Sigmoid colon (tissue), 7 donors: ENCODE measurements at regions of chr16 and their contacts with region 1.

Region 1: DNA sequence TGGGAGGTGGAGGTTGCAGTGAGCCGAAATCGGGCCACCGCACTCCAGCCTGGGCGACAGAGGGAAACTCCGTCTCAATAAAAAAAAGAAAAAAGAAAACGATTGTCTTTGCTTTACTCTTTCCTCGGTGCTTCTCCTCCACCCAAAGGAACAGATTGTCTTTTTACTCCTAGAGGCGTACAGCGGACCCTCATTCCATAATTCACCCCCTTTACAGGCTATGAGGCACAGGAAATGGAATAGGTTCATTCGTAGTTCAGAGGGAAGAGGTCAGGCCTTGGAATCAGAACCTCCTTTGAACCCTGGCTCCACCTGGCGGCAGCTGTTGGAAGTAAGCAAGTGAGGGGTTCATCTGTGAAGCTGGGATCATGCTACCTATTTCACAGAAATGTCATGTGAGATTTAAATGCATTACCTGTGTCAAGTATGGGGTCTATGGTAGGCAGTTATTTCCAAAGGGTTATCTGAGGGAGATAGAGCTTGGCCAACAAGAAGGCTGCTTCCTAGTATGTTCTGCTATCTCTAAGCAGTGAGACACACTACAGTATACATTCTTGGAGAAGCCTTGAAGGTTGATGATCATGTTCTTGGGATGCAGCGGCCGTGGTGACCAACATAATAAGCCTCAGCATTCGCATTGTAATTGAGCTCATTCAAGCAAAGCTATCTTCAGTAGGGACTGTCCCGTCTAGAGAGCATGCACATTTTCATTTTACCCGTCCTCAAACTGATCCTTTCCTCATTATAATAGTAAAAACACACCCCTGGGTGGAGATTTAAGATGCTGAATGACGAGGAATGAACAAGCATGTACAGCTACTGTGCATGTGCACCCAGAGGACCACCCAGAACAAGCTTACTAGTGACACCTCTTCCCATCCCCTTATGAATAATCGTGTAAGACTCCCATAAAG is 18.7 kb upstream of the ZNF689 start:
- DNase-seq: peak; percentile 91
- H3K4me3 ChIP-seq: peak overlapping the region in 2 of 4 donors; percentile 13 to 26
- H3K27ac ChIP-seq: peak overlapping the region; percentile 28 to 64 (median 54)
- H3K4me1 ChIP-seq: peaks cover 0 to 6% (median 4%) of the 10 kb centered on the region in 4 donors
- H3K27me3 ChIP-seq: no peaks in the 10 kb centered on the region
- CTCF ChIP-seq: peak; percentile 75 to 94 (median 86)
- EP300 ChIP-seq: no peak
- POLR2A ChIP-seq: no peak

Region 2: DNA sequence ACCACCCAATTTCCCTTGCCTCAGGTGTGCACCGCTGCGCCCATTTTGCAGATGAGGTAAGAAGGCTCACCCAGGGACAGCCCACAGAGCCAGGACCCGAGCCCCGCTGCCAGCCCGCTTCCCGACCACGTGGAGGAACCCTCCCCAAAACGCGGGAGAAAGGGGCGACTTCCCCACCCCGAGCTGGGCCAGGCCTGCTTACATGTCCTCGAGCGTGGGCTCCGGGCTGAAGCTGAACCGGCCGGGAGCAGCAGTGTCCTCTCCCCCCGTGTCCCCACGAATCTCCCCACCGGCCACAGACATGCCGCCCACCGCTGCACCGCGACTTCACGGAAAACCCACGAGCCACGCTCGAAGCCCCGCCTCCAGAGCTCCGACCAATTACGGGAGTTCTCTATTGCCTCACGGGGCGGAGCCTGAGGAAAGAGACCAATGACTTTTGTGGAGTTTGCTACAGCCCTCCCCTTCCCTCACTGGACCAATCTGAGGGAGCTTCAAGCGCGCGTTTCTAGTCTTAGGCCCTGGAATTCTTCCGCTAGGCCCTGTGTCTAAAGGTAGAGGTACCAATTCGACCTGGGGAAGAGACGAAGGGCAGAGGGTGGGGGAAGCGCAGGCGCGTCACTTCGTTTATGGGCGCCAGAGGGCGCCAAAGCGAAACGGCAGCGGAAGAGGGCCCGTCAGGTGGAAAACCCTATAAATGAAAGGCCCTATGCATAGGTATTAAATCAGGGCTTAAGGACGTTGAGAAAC is 199.0 kb before region 1 on chr16 and contains the start of gene DCTPP1:
- intact Hi-C with region 1: loop called (anchors 5 kb)
- DNase-seq: peak; percentile 98
- H3K4me3 ChIP-seq: peak within 1 kb of the TSS; percentile 46 to 74 (median 56)
- H3K27ac ChIP-seq: peak within 1 kb of the TSS; percentile 79 to 84 (median 82)
- H3K4me1 ChIP-seq: peaks cover 0 to 21% (median 16%) of the 10 kb centered on the region in 4 donors
- H3K27me3 ChIP-seq: no peaks in the 10 kb centered on the region
- CTCF ChIP-seq: peak; percentile 60 to 82 (median 62)
- EP300 ChIP-seq: no peak
- POLR2A ChIP-seq: no peak
- total RNA-seq, gene DCTPP1: 10.5 to 19.9 (median 16.5) TPM

Region 3: GRCh38 chr16:30534368-30535105 is 94.3 kb before region 1 on chr16 and contains the start of gene ZNF747:
- intact Hi-C with region 1: loop called (anchors 5 kb)
- DNase-seq: peak; percentile 97
- H3K4me3 ChIP-seq: peak within 1 kb of the TSS; percentile 45 to 85 (median 66)
- H3K27ac ChIP-seq: peak within 1 kb of the TSS; percentile 89 to 97 (median 94)
- H3K4me1 ChIP-seq: peaks cover 0 to 31% (median 25%) of the 10 kb centered on the region in 4 donors
- H3K27me3 ChIP-seq: no peaks in the 10 kb centered on the region
- CTCF ChIP-seq: no peak
- EP300 ChIP-seq: no peak
- POLR2A ChIP-seq: peak; percentile 50 to 65
- total RNA-seq, gene ZNF747: 10.3 to 15.5 (median 13.1) TPM

Region 4: DNA sequence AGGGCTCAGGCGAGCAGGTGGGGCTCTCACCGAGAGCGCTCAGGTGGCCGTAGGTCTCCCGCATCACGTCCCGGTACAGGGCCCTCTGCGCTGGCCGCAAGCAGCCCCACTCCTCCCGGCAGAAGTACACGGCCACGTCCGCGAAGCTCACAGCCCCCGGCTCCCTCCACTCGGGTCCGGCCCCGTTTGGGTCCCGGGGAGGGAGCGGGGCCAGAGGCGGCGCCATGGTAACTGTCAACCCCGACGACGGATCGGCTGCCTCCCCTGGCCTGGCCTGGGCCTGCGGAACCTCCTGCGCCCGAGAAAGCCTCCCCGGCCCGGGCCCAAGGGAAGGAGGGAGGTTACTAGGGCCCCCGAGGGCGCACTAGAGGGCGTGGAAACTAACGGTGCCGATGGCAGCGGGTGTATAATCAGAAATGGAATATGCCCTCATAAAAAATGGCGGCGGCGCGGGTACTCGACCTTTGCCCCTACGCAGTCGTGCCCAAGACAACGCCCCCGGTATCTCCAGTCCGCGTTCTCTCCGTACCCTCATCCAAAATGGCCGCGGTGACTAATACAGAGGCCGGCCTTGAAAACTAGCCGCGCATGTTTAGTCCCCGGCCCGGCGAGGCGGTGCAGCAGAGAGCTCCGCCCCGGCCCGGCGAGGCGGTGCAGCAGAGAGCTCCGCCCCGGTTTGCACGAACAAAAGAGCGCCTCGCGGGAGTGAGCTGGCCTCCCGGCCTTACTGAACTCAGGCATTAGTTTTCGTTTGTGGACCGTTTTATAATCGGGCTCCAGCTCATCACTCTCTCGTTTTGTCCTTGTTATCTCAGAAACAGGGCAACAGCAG is 70.7 kb before region 1 on chr16 and contains the start of gene ZNF764:
- intact Hi-C with region 1: loop called (anchors 5 kb)
- DNase-seq: peak; percentile 99
- H3K4me3 ChIP-seq: peak within 1 kb of the TSS; percentile 49 to 87 (median 84)
- H3K27ac ChIP-seq: peak within 1 kb of the TSS; percentile 89 to 98 (median 96)
- H3K4me1 ChIP-seq: peaks cover 0 to 32% (median 28%) of the 10 kb centered on the region in 4 donors
- H3K27me3 ChIP-seq: no peaks in the 10 kb centered on the region
- CTCF ChIP-seq: no peak
- EP300 ChIP-seq: no peak
- POLR2A ChIP-seq: peak in 1 of 2 donors; percentile 22
- total RNA-seq, gene ZNF764: 6.1 to 8.6 (median 8.1) TPM

Region 5: DNA sequence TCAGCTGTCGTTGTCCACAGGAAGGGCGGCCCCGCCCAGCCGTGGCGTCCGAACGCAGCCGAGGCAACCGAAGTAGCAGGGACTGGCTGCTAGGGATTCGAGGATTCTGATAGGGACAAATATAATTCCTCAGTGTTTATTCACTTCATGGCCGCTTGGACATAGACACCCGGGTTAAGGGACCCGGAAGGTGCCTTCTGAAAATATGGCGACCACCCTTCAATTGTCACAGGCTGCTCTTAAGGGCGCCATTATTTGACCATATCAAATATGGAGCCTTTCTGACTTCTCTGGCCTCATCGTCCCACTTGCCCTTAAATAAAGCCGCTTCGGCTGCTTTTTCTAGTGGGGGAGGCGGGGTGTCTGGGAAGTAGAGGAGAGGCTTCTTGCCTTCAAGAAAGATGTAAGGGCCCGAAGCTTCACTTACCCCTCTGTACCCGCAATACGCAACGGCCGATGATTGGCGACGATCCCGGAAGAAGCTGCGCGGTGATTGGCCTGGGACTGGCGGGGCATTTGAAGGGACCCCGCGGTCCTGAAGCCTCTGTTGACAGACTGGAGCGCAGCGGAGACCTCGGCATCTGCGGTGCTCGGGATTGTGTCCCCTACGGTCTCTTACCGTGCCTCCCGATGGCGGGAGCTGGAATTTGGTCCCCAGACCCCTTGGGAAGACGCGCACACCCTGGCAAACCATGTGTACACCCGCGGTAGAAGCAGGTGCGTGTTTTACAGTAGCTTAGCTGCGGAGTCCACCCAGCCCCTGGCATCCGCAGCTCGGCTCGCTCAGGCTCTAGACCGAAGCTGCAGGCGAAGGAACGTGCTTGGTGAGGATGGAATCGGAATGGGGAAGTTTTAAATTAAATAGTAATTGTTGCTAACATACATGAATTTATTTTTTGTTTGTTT is 56.9 kb before region 1 on chr16 and contains the start of gene ZNF688:
- intact Hi-C with region 1: loop called (anchors 5 kb)
- DNase-seq: peak; percentile 99
- H3K4me3 ChIP-seq: peak within 1 kb of the TSS; percentile 42 to 95 (median 84)
- H3K27ac ChIP-seq: peak within 1 kb of the TSS; percentile 94 to 98 (median 97)
- H3K4me1 ChIP-seq: peaks cover 0 to 24% (median 21%) of the 10 kb centered on the region in 4 donors
- H3K27me3 ChIP-seq: no peaks in the 10 kb centered on the region
- CTCF ChIP-seq: no peak
- EP300 ChIP-seq: no peak
- POLR2A ChIP-seq: peak; percentile 33 to 66
- total RNA-seq, gene ZNF688: 21.9 to 32.8 (median 25.4) TPM

Region 6: GRCh38 chr16:30585400-30586189 is 43.3 kb before region 1 on chr16 and contains the start of gene ZNF785:
- intact Hi-C with region 1: loop called (anchors 2 kb)
- DNase-seq: peak; percentile 99
- H3K4me3 ChIP-seq: peak within 1 kb of the TSS; percentile 59 to 88 (median 70)
- H3K27ac ChIP-seq: peak within 1 kb of the TSS; percentile 91 to 94 (median 94)
- H3K4me1 ChIP-seq: peaks cover 0 to 29% (median 28%) of the 10 kb centered on the region in 4 donors
- H3K27me3 ChIP-seq: no peaks in the 10 kb centered on the region
- CTCF ChIP-seq: no peak
- EP300 ChIP-seq: no peak
- POLR2A ChIP-seq: no peak
- total RNA-seq, gene ZNF785: 5.9 to 19.9 (median 7.9) TPM

Region 7: GRCh38 chr16:30609926-30610839 is 18.7 kb before region 1 on chr16 and contains the start of gene ZNF689:
- intact Hi-C with region 1: no loop called
- DNase-seq: peak; percentile 98
- H3K4me3 ChIP-seq: peak within 1 kb of the TSS; percentile 69 to 96 (median 83)
- H3K27ac ChIP-seq: peak within 1 kb of the TSS; percentile 96 to 99 (median 97)
- H3K4me1 ChIP-seq: peaks cover 0 to 23% (median 16%) of the 10 kb centered on the region in 4 donors
- H3K27me3 ChIP-seq: no peaks in the 10 kb centered on the region
- CTCF ChIP-seq: no peak
- EP300 ChIP-seq: no peak
- POLR2A ChIP-seq: peak; percentile 32 to 36
- total RNA-seq, gene ZNF689: 7.9 to 10.3 (median 9.8) TPM

Region 8: DNA sequence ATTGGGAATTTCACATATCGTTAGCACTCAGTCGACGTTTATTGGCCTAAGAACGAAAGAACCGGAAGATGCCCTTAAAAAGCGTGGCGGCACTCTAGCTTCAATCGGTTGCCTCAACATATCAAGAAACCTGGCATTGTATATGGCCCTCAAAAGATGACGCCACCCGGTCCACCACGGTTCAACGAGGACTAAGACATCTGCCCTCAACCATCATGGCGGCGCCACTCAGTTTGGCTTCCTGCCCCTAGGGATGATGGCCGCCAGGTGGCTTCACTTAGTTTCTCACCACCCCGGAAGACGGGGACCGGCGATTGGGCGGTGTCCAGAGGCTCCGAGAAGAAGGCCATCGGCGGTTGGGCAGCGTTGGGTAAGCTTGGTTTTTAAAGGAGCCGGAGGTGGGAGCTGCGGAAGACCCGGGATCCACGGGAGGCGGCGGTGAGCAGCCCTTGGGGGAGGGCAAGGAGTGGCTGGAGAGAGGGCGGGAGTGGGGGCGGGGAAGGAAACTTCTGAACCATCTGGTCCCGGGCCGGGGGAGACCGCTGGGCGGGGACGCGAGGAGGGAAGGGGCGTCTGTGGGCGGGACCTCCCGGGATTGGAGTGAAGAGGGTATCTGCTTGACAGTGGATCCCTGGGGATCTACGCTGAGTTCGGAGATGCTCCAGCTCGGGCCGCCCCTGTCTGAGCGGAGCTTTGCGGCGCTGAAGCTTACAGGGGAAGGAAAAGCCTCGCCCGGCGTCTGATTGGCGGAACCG is 21.7 kb after region 1 on chr16 and contains the start of gene PRR14:
- intact Hi-C with region 1: loop called (anchors 1 kb)
- DNase-seq: peak; percentile 100
- H3K4me3 ChIP-seq: peak within 1 kb of the TSS; percentile 74 to 87 (median 78)
- H3K27ac ChIP-seq: peak within 1 kb of the TSS; percentile 97 to 99 (median 98)
- H3K4me1 ChIP-seq: peaks cover 0 to 35% (median 31%) of the 10 kb centered on the region in 4 donors
- H3K27me3 ChIP-seq: no peaks in the 10 kb centered on the region
- CTCF ChIP-seq: peak in 3 of 4 experiments; percentile 30 to 60 (median 58)
- EP300 ChIP-seq: no peak
- POLR2A ChIP-seq: peak; percentile 56 to 59
- total RNA-seq, gene PRR14: 20.8 to 37.5 (median 29.4) TPM

Region 9: DNA sequence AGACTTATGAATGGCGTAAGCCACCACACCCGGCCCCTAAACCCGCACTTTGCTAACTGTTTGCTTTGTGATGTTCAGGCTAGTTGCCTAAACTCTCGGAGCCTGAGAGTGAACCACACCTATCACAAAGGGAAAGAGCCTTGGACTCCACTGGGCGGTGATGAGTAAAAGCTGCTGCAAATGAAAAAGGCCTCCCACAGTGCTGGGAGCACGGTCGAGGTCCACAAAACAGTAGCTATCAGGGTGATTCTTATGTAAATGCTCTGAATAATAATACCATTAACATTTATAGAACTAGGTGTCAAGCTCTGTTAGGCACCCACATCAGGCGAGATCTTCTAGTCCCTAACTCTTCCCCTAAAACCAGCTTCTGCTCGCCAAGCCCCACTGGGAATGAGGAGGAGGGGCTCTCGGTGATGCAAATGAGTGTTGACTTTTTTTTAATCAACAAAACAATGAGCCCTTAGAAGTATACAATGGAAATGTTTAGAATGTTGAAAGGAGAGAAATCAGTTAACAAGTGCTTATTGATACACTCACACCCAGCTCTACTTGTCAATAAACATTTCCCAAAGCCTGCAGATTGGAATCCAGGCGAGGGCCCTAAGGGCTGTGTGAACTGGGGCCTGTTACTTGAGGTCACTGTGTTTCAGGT is 49.2 kb after region 1 on chr16:
- intact Hi-C with region 1: no loop called
- DNase-seq: no peak
- H3K4me3 ChIP-seq: no peak overlapping the region
- H3K27ac ChIP-seq: no peak overlapping the region
- H3K4me1 ChIP-seq: no peaks in the 10 kb centered on the region
- H3K27me3 ChIP-seq: no peaks in the 10 kb centered on the region
- CTCF ChIP-seq: no peak
- EP300 ChIP-seq: no peak
- POLR2A ChIP-seq: no peak